ENCODE measurements at regions of chr13 and their contacts with region 1.

Region 1: DNA sequence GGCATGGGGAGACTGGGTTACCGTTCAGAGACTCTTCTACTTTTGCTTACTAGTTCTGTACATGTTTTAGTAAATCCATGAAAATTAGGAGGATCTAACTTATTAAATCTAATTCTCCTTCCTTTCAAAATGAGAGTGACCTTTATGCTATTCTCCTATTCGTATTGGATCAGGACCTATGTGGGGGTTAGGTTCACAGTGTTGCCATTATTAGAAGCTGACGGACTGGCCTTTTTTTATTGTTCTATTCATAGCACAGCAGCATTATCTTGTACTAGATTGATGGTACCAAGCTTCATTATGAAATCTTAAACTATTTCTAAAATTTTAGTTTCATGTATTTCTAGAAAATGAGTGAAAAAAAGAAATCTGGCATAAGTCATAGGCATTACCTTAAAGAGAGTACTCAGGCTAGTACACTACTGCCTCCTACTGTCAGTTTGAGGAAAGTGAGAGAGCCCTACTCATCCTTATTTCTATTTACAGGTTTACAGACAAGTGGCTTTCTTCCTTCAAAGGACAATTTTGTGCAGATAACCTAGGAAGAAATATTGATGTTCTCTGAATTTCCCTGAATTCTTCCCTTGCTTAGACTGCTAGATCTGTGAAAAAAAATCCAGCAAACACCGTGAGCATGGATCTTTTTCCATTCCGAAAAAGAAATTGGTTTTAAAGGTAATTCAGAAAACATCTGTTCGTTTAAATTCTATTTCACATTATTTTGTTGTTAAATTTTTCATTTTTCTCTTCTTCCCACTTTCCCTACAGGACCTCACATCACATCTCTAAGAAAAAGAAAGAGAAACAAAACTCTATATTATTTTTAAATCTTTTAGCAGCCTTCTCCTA is 485.5 kb downstream of the DIAPH3 start:
- DNase-seq: peak; percentile 15 to 49 (median 20)
- ATAC-seq: peak; percentile 78
- H3K4me3 ChIP-seq: no peak overlapping the region
- H3K27ac ChIP-seq: no peak overlapping the region
- H3K4me1 ChIP-seq: no peaks in the 10 kb centered on the region
- H3K27me3 ChIP-seq: no peaks in the 10 kb centered on the region
- CTCF ChIP-seq: peak; percentile 37 to 69 (median 54); a peak in 5 of 6 replicates
- EP300 ChIP-seq: no peak
- POLR2A ChIP-seq: no peak
- RAD21 ChIP-seq: peak; percentile 57 to 73

Region 2: DNA sequence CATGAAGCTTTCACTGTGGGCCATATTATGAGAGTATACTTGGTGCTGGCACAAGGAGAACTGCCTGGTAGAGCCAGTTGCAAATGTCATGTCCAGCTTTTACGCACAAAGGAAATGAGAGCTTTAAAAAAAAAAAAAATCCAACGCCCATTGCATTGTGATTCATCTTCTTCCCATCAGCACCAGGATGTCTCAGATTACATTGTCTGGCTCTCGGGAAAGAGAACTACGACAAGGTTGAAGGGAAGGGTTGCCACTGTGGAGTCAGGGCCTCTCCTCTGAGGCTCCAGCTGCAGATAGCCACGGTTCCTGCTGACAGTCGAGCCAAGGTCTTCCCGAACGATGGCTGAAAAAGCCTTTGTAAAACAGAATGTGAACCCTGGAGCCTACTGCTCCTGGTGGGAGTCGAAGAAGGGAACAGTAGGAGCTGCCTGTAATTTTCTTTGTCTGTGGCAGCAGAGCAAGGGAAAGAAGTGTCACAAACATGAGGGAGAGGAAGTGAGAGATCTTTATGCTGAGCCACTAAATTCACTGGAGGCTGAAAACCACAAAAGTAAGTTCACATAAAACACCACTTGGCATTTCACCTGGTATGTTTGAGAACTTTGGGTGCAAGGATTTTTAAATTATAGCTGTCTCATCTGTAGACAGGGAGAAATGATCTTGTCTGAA is 219.1 kb before region 1 on chr13:
- CTCF ChIA-PET with region 1: no interaction called
- POLR2A ChIA-PET with region 1: no interaction called
- in situ Hi-C with region 1: no loop called
- intact Hi-C with region 1: loop called (anchors 2 kb)
- DNase-seq: no peak
- ATAC-seq: no peak
- H3K4me3 ChIP-seq: no peak overlapping the region
- H3K27ac ChIP-seq: no peak overlapping the region
- H3K4me1 ChIP-seq: peaks cover 4 to 6% of the 10 kb centered on the region in 2 experiments; a peak in 3 of 5 replicates
- H3K27me3 ChIP-seq: no peaks in the 10 kb centered on the region
- CTCF ChIP-seq: no peak
- EP300 ChIP-seq: no peak
- POLR2A ChIP-seq: no peak
- RAD21 ChIP-seq: no peak

Region 3: GRCh38 chr13:59906413-59907049 is 228.3 kb after region 1 on chr13:
- CTCF ChIA-PET with region 1: interaction called, 3 read pairs
- POLR2A ChIA-PET with region 1: no interaction called
- in situ Hi-C with region 1: no loop called
- intact Hi-C with region 1: loop called (anchors 2 kb)
- DNase-seq: peak in 2 of 4 experiments; percentile 2 to 19
- ATAC-seq: 0 out of 3 replicates have a peak, but pooled peaks have one; percentile 57
- H3K4me3 ChIP-seq: no peak overlapping the region
- H3K27ac ChIP-seq: no peak overlapping the region
- H3K4me1 ChIP-seq: no peaks in the 10 kb centered on the region; a peak in 1 of 5 replicates
- H3K27me3 ChIP-seq: no peaks in the 10 kb centered on the region
- CTCF ChIP-seq: peak; percentile 18 to 50 (median 39); a peak in 4 of 6 replicates
- EP300 ChIP-seq: no peak
- POLR2A ChIP-seq: no peak
- RAD21 ChIP-seq: peak; percentile 34 to 35; a peak in 3 of 4 replicates

Region 4: GRCh38 chr13:60329221-60329983 is 651.2 kb after region 1 on chr13:
- CTCF ChIA-PET with region 1: interaction called, 4 read pairs
- POLR2A ChIA-PET with region 1: no interaction called
- in situ Hi-C with region 1: loop called (anchors 10 kb)
- intact Hi-C with region 1: loop called (anchors 5 kb)
- DNase-seq: peak; percentile 32 to 70 (median 38)
- ATAC-seq: peak; percentile 96
- H3K4me3 ChIP-seq: no peak overlapping the region
- H3K27ac ChIP-seq: no peak overlapping the region
- H3K4me1 ChIP-seq: no peaks in the 10 kb centered on the region; a peak in 1 of 5 replicates
- H3K27me3 ChIP-seq: no peaks in the 10 kb centered on the region
- CTCF ChIP-seq: peak; percentile 58 to 73 (median 65)
- EP300 ChIP-seq: no peak
- POLR2A ChIP-seq: no peak
- RAD21 ChIP-seq: peak; percentile 65 to 81

Region 5: GRCh38 chr13:60431108-60431700 is 753.0 kb after region 1 on chr13:
- CTCF ChIA-PET with region 1: interaction called, 9 read pairs
- POLR2A ChIA-PET with region 1: no interaction called
- in situ Hi-C with region 1: no loop called
- intact Hi-C with region 1: loop called (anchors 1 kb)
- DNase-seq: peak; percentile 16 to 55 (median 18)
- ATAC-seq: peak; percentile 86
- H3K4me3 ChIP-seq: no peak overlapping the region
- H3K27ac ChIP-seq: no peak overlapping the region
- H3K4me1 ChIP-seq: no peaks in the 10 kb centered on the region
- H3K27me3 ChIP-seq: no peaks in the 10 kb centered on the region
- CTCF ChIP-seq: peak; percentile 48 to 87 (median 49); a peak in 5 of 6 replicates
- EP300 ChIP-seq: no peak
- POLR2A ChIP-seq: no peak
- RAD21 ChIP-seq: peak; percentile 86 to 89